ENCODE measurements at regions of chr21 and their contacts with region 1.

Region 1: GRCh38 chr21:38567335-38567969 is 69.2 kb upstream of the ERG start:
- DNase-seq: no peak
- H3K4me3 ChIP-seq: no peak overlapping the region
- H3K27ac ChIP-seq: no peak overlapping the region
- H3K4me1 ChIP-seq: no peaks in the 10 kb centered on the region
- H3K27me3 ChIP-seq: no peaks in the 10 kb centered on the region
- CTCF ChIP-seq: no peak

Region 2: DNA sequence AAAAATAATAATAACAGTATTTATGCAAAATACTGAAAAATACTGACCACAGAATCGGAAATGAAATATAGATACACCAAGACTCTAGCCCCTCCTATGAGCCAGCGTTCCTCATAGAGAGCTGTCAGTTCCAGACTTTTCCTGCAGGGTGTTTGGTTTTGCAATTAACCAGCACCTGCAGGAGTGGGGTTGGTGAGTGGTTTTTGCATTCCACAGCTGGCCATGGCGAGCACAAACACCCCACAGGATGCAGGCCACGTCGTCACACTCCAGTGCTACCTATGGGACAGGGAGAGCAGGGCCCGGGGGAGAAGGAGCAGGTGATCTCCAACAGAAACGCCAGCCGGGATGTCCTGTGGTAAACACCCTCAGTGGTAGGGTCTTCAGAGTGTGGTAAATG is 163.3 kb before region 1 on chr21:
- CTCF ChIA-PET with region 1: no interaction called
- dilution Hi-C with region 1: no loop called
- in situ Hi-C with region 1: no loop called
- intact Hi-C with region 1: no loop called
- DNase-seq: no peak
- H3K4me3 ChIP-seq: no peak overlapping the region
- H3K27ac ChIP-seq: no peak overlapping the region
- H3K4me1 ChIP-seq: no peaks in the 10 kb centered on the region
- H3K27me3 ChIP-seq: no peaks in the 10 kb centered on the region
- CTCF ChIP-seq: no peak

Region 3: GRCh38 chr21:38511662-38512243 is 55.7 kb before region 1 on chr21:
- CTCF ChIA-PET with region 1: no interaction called
- dilution Hi-C with region 1: loop called (anchors 5 kb)
- in situ Hi-C with region 1: no loop called
- intact Hi-C with region 1: no loop called
- DNase-seq: no peak
- H3K4me3 ChIP-seq: no peak overlapping the region
- H3K27ac ChIP-seq: no peak overlapping the region
- H3K4me1 ChIP-seq: no peaks in the 10 kb centered on the region
- H3K27me3 ChIP-seq: no peaks in the 10 kb centered on the region
- CTCF ChIP-seq: peak in 1 of 2 donors; percentile 33